ENCODE measurements at regions of chr11 and their contacts with region 1.

Region 1: DNA sequence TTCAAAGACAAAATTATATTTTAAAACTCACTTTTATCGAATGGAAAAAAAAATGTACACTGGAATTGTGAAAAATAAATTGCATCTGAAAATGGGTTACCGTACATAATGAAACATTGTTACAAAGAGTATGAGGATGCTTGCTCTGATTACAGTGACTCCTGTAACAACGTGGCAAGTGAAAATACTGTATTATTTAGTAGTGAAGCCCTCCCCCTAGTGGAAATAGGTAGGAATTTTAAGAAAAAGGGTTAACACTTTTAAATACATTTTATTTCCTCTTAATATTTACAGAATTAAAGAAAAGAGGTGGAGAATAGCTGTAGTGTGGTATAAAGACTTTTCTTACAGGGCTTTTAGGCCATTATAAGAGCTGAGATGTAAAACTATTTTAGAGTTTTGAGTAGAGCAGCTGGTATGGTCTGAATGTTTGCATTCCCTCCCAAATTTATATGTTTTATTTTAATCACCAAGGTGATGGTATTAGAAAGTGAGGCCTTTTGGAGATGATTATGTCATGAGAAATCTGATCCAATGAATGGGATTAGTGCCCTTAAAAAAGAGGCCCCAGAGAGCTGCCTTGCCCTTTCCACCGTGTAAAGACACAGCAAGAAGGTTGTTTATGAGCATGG is 25.2 kb downstream of the FAM76B start:
- DNase-seq: no peak
- H3K4me3 Mint-ChIP-seq: no peak overlapping the region
- H3K27ac Mint-ChIP-seq: no peak overlapping the region
- H3K4me1 Mint-ChIP-seq: no peaks in the 10 kb centered on the region
- H3K27me3 Mint-ChIP-seq: no peaks in the 10 kb centered on the region

Region 2: DNA sequence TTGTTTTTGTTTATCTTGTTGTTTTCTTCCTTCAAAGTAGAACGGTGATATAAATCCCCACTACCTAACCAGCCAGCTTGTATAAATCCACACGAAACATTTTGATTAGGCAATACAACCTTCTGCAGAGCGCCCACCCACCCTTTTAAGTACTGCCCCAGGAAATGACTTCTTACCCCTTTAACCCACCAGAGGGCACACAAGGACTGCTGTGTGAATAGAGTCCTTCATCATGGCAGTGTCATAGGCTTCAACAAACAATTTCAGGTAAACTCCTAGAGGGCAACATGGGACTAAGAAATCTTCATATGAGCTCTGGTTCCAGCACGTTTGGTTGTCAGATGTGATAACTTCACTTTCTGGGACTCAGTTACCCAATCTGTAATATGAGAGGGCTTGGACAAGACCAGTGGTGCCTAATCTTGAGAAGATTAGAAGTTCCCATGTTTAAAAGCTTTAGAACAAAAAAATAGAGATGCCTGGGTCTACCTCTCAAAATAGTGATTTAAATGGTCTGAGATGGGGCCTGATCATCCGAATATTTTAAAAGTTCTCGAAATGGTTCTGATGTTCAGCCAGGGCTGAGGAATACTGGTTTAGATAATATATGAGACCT is 1141.2 kb before region 1 on chr11:
- intact Hi-C with region 1: loop called (anchors 10 kb)
- DNase-seq: peak; percentile 27
- H3K4me3 Mint-ChIP-seq: no peak overlapping the region
- H3K27ac Mint-ChIP-seq: no peak overlapping the region
- H3K4me1 Mint-ChIP-seq: no peaks in the 10 kb centered on the region
- H3K27me3 Mint-ChIP-seq: peaks cover 7% of the 10 kb centered on the region

Region 3: DNA sequence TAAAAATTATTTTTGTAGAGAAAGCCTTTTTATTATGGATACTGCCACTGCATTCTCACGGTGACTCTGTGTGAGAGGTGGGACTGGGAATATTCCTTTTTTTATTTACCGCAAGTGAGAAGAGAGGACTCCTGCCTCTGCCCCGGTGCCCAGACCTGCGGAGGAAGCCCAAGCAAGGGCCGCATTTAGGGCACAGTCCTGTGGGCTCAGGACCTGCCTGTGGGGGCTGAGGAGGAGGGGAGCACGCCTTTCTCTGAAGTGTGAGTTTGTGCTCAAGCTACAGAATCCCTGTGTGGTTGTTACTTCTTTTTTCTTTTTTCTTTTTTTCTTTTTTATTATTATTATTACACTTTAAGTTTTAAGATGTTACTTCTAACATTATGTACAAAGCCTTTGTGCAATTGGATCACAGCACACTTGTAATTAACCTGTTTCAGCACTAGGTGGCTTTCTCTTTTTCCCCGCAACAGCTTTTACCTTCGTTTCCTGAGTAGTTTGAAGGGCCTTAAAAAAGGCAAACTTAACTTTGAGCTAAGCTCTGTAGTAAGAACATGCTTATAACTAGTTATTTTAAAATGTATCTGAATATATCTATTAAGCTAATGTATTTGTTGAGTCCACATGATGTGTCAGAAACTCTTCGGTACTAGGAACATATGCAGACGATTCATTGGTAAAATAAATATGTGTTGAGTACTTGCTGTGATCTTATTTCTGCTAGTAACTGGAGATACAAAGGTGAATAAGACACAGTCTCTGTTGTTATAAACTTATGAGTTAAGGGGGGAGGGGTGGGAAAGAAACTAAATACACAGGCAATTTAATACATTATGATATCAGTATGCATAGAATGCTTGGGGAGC is 977.9 kb before region 1 on chr11:
- intact Hi-C with region 1: loop called (anchors 5 kb)
- DNase-seq: no peak
- H3K4me3 Mint-ChIP-seq: no peak overlapping the region
- H3K27ac Mint-ChIP-seq: no peak overlapping the region
- H3K4me1 Mint-ChIP-seq: no peaks in the 10 kb centered on the region
- H3K27me3 Mint-ChIP-seq: peaks cover 4% of the 10 kb centered on the region

Region 4: DNA sequence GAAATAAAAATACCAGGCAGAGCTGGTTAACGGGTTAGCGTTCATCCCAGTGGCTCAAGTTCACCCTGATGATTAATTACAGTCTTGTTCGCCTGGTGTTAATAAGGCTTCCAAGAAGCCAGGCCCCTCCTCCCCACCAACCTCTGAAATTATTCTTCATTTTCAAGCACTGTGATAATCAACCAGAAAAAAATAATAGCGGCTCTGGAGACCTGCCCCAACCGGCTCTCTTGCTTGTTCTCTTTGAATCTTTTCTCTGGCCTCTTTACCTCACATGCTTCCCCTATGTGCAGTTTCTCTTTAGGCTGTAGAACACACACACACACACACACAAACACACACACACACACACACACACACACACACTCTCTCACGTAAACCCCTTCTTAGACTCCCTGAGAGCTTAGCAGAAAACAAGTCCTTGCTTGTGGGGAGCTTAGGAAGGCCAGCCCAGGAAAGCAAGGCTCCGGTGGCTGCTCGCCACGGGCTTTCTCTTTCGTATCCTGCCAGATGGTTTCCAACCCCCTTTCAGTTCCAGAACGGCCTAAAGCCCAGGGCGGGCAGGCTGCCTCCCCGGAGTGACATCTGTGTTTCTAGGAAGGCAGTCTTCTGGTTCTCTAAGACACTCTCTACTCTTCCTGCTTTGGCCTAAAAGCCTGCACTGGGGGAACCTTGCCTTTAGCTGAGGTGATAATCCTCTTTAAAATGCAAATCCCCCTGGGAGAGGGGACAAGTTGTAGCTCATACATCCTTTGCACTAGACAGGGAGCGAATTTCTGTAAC is 427.0 kb before region 1 on chr11:
- intact Hi-C with region 1: loop called (anchors 5 kb)
- DNase-seq: peak; percentile 41
- H3K4me3 Mint-ChIP-seq: no peak overlapping the region
- H3K27ac Mint-ChIP-seq: no peak overlapping the region
- H3K4me1 Mint-ChIP-seq: no peaks in the 10 kb centered on the region
- H3K27me3 Mint-ChIP-seq: peaks cover 8% of the 10 kb centered on the region

Region 5: GRCh38 chr11:95661162-95661561 is 103.2 kb before region 1 on chr11:
- intact Hi-C with region 1: no loop called
- DNase-seq: no peak
- H3K4me3 Mint-ChIP-seq: no peak overlapping the region
- H3K27ac Mint-ChIP-seq: no peak overlapping the region
- H3K4me1 Mint-ChIP-seq: peaks cover 27% of the 10 kb centered on the region
- H3K27me3 Mint-ChIP-seq: no peaks in the 10 kb centered on the region

Region 6: GRCh38 chr11:95705485-95706124 is 58.8 kb before region 1 on chr11:
- intact Hi-C with region 1: loop called (anchors 1 kb)
- DNase-seq: peak; percentile 77
- H3K4me3 Mint-ChIP-seq: no peak overlapping the region
- H3K27ac Mint-ChIP-seq: no peak overlapping the region
- H3K4me1 Mint-ChIP-seq: peaks cover 17% of the 10 kb centered on the region
- H3K27me3 Mint-ChIP-seq: peaks cover 3% of the 10 kb centered on the region

Measured in activated T-helper 1 cell treated with anti-CD3 and anti-CD28 coated beads, Interleukin-12 subunit alpha, Interleukin-12 subunit beta, Interleukin-2, Interleukin-4 antibody, amounts not matched to agents 30 ng/mL and 10 ng/mL and 1 ng/mL, durations not matched to agents 14 hours and 24 hours and 36 hours (primary cell).